ENCODE measurements at regions of chrX and their contacts with region 1.

Region 1: DNA sequence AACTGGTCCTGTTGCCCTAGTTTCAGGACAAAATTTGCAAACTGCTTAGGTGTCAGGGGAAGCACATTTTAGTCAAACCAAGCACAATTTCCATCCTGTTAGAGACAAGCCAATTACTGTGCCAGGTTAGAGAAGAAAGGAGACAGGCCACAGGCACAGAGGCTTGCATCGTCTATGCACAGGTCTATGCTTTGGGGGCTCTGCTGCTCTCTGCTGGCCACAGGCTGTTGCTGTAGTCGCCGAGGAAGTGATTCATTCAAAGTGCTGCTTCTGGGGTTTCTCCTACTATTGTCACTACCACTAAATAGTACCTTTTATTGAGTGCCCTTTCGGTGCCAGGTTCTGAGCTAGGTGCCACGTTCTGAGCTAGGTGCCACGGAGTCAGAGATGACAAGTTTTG is 45.5 kb downstream of the VGLL1 start:
- DNase-seq: peak; percentile 12 to 59 (median 52)
- ATAC-seq: peak; percentile 67 to 91 (median 82)
- H3K4me3 ChIP-seq: no peak overlapping the region
- H3K27ac ChIP-seq: no peak overlapping the region
- H3K4me1 ChIP-seq: peaks cover 0 to 12% (median 2%) of the 10 kb centered on the region in 12 donors
- H3K27me3 ChIP-seq: peaks cover 0 to 7% (median 0%) of the 10 kb centered on the region in 9 donors
- CTCF ChIP-seq: peak; percentile 38 to 73 (median 54)
- POLR2A ChIP-seq: no peak

Region 2: GRCh38 chrX:136162831-136163570 is 414.6 kb before region 1 on chrX:
- intact Hi-C with region 1: loop called in 1 of 10 experiments (anchors 10 kb)
- DNase-seq: peak; percentile 47 to 70 (median 63)
- ATAC-seq: peak; percentile 41 to 80 (median 78)
- H3K4me3 ChIP-seq: peak overlapping the region in 1 of 12 donors; percentile 0
- H3K27ac ChIP-seq: peak overlapping the region in 10 of 12 donors; percentile 9 to 87 (median 56)
- H3K4me1 ChIP-seq: peaks cover 0 to 76% (median 11%) of the 10 kb centered on the region in 12 donors
- H3K27me3 ChIP-seq: peaks cover 0 to 8% (median 0%) of the 10 kb centered on the region in 9 donors
- CTCF ChIP-seq: peak; percentile 47 to 78 (median 66)
- POLR2A ChIP-seq: no peak

Region 3: GRCh38 chrX:136376713-136377112 is 200.8 kb before region 1 on chrX:
- intact Hi-C with region 1: no loop called
- DNase-seq: no peak
- ATAC-seq: no peak
- H3K4me3 ChIP-seq: no peak overlapping the region
- H3K27ac ChIP-seq: no peak overlapping the region
- H3K4me1 ChIP-seq: no peaks in the 10 kb centered on the region
- H3K27me3 ChIP-seq: no peaks in the 10 kb centered on the region
- CTCF ChIP-seq: no peak
- POLR2A ChIP-seq: no peak

Region 4: GRCh38 chrX:136525738-136526606 is 51.6 kb before region 1 on chrX:
- intact Hi-C with region 1: loop called in 3 of 10 experiments (anchors 10 kb)
- DNase-seq: peak; percentile 68 to 85 (median 72)
- ATAC-seq: peak; percentile 93 to 99 (median 99)
- H3K4me3 ChIP-seq: no peak overlapping the region
- H3K27ac ChIP-seq: peak overlapping the region; percentile 28 to 86 (median 66)
- H3K4me1 ChIP-seq: peaks cover 0 to 17% (median 0%) of the 10 kb centered on the region in 12 donors
- H3K27me3 ChIP-seq: peaks cover 0 to 1% (median 0%) of the 10 kb centered on the region in 9 donors
- CTCF ChIP-seq: no peak
- POLR2A ChIP-seq: no peak

Region 5: GRCh38 chrX:136694431-136695087 is 117.0 kb after region 1 on chrX:
- intact Hi-C with region 1: loop called in 1 of 10 experiments (anchors 5 kb)
- DNase-seq: no peak
- ATAC-seq: peak in 2 of 4 donors; percentile 56 to 57
- H3K4me3 ChIP-seq: no peak overlapping the region
- H3K27ac ChIP-seq: peak overlapping the region in 1 of 12 donors; percentile 29
- H3K4me1 ChIP-seq: peaks cover 0 to 3% (median 0%) of the 10 kb centered on the region in 12 donors
- H3K27me3 ChIP-seq: peaks cover 0 to 3% (median 0%) of the 10 kb centered on the region in 9 donors
- CTCF ChIP-seq: peak in 11 of 12 donors; percentile 34 to 55 (median 46)
- POLR2A ChIP-seq: no peak

Region 6: GRCh38 chrX:136806891-136807410 is 229.4 kb after region 1 on chrX:
- intact Hi-C with region 1: no loop called
- DNase-seq: no peak
- ATAC-seq: no peak
- H3K4me3 ChIP-seq: no peak overlapping the region
- H3K27ac ChIP-seq: no peak overlapping the region
- H3K4me1 ChIP-seq: no peaks in the 10 kb centered on the region
- H3K27me3 ChIP-seq: peaks cover 0 to 5% (median 0%) of the 10 kb centered on the region in 9 donors
- CTCF ChIP-seq: no peak
- POLR2A ChIP-seq: no peak